ENCODE measurements at regions of chr5 and their contacts with region 1.

Region 1: DNA sequence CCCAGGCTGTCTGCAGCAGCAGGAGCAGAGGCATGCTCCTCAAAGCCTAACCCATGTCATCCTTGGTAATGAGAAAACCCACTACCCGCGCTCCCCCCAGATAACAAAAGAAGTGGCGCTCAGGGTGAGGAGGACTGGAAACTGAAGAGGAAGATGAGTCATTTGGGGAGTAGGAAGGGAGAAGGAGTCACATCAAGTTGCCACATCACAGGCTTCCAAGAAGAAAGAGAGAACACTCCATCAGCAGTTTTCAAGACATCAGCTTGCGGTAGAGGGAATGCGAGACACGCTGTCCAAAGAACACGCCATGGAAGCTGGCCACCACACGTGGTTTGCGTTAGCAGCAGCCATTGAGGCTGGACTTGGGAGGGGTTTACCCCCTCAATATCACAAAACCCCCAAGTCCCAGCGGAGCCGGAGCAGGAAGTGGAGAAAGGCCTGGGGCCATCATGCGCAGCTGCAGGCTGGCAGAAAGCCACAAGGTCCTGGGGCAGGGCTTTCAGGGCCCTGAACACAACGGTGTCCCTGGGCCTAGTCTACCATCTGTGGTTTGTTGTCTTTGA is 41.5 kb downstream of the SH3PXD2B start:
- DNase-seq: peak; percentile 26
- H3K4me3 Mint-ChIP-seq: no peak overlapping the region
- H3K27ac Mint-ChIP-seq: no peak overlapping the region
- H3K4me1 Mint-ChIP-seq: peaks cover 25% of the 10 kb centered on the region
- H3K27me3 Mint-ChIP-seq: peaks cover 4% of the 10 kb centered on the region

Region 2: GRCh38 chr5:172361566-172362238 is 51.1 kb before region 1 on chr5:
- CTCF ChIA-PET with region 1: no interaction called
- intact Hi-C with region 1: loop called (anchors 10 kb)
- DNase-seq: peak; percentile 82
- H3K4me3 Mint-ChIP-seq: no peak overlapping the region
- H3K27ac Mint-ChIP-seq: peak overlapping the region; percentile 83
- H3K4me1 Mint-ChIP-seq: peaks cover 8% of the 10 kb centered on the region
- H3K27me3 Mint-ChIP-seq: no peaks in the 10 kb centered on the region

Region 3: DNA sequence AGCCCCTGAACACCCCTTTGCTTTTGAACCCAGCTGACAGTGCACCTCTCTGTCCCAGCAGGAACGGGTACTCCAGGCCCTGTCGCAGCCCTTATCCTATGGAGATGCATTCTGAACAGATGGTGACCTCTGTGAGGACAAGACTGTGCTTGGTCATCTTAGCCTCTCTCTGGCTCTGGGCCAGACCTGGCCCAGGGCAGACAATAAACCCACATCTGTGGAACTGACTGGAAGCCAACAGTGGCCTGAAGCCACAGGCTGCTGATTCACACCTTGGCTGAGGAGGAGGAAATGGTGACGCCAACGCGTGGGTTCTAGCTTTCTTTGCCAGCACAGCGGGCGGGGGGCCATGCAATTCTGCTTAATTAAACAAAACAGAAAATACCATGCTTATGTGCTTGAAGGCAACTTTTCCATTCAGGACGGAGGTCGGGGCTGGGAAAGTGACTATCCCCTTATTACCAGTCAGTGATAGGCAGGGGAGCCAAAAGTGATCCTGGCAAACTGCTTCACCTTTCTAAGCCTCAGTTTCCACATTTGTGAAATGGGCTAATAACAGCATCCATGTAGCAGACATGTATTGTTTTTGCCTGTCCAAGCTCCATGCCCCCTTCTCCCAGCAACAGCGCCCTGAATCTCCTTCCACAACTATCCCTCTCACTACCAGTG is 30.8 kb after region 1 on chr5:
- CTCF ChIA-PET with region 1: no interaction called
- intact Hi-C with region 1: loop called (anchors 2 kb)
- DNase-seq: peak; percentile 82
- H3K4me3 Mint-ChIP-seq: no peak overlapping the region
- H3K27ac Mint-ChIP-seq: no peak overlapping the region
- H3K4me1 Mint-ChIP-seq: peaks cover 12% of the 10 kb centered on the region
- H3K27me3 Mint-ChIP-seq: peaks cover 11% of the 10 kb centered on the region

Region 4: DNA sequence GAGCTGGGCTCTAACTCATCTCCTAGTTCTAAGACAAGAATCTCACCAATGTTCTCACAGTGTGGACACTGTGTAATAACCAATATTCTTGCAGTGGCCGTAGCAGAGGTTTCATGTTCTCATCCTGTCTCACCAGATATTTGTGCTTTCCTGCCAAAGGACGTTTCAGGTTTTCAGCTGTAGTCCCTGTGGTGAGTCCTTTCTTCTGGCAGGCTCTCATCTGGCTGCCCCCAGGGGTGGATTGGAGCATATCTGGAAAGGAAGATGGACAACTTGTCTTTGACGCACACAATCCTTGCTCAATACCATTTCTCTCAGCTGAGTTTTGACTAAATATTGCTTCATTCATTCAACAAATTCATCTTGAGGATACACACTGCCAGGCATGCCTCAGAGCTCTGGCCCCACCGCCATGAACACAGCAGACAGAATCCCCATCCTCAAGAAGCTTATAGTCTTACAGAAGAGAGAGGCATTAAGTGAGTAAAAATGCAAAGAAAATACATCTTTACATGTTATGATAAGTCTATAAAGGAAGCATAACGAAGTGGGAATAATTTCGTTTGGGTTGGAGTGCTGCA is 194.5 kb after region 1 on chr5:
- CTCF ChIA-PET with region 1: no interaction called
- intact Hi-C with region 1: no loop called
- DNase-seq: no peak
- H3K4me3 Mint-ChIP-seq: no peak overlapping the region
- H3K27ac Mint-ChIP-seq: no peak overlapping the region
- H3K4me1 Mint-ChIP-seq: no peaks in the 10 kb centered on the region
- H3K27me3 Mint-ChIP-seq: peaks cover 13% of the 10 kb centered on the region